ENCODE measurements at regions of chr12 and their contacts with region 1.

Region 1: GRCh38 chr12:57355734-57356133 is 75.1 kb downstream of the R3HDM2 start:
- DNase-seq: no peak
- H3K4me3 ChIP-seq: no peak overlapping the region
- H3K27ac ChIP-seq: no peak overlapping the region
- H3K4me1 ChIP-seq: no peaks in the 10 kb centered on the region
- H3K27me3 ChIP-seq: no peaks in the 10 kb centered on the region
- CTCF ChIP-seq: no peak

Region 2: GRCh38 chr12:57261428-57261865 is 94.3 kb before region 1 on chr12:
- CTCF ChIA-PET with region 1: interaction called, 16 read pairs
- POLR2A ChIA-PET with region 1: no interaction called
- intact Hi-C with region 1: no loop called
- DNase-seq: no peak
- H3K4me3 ChIP-seq: no peak overlapping the region
- H3K27ac ChIP-seq: no peak overlapping the region
- H3K4me1 ChIP-seq: no peaks in the 10 kb centered on the region
- H3K27me3 ChIP-seq: no peaks in the 10 kb centered on the region
- CTCF ChIP-seq: no peak

Region 3: GRCh38 chr12:57309420-57309819 is 46.3 kb before region 1 on chr12:
- CTCF ChIA-PET with region 1: no interaction called
- POLR2A ChIA-PET with region 1: interaction called, 15 read pairs
- intact Hi-C with region 1: no loop called
- DNase-seq: no peak
- H3K4me3 ChIP-seq: no peak overlapping the region
- H3K27ac ChIP-seq: no peak overlapping the region
- H3K4me1 ChIP-seq: no peaks in the 10 kb centered on the region
- H3K27me3 ChIP-seq: no peaks in the 10 kb centered on the region
- CTCF ChIP-seq: no peak

Region 4: GRCh38 chr12:57397441-57397840 is 41.7 kb after region 1 on chr12:
- CTCF ChIA-PET with region 1: no interaction called
- POLR2A ChIA-PET with region 1: no interaction called
- intact Hi-C with region 1: no loop called
- DNase-seq: no peak
- H3K4me3 ChIP-seq: no peak overlapping the region
- H3K27ac ChIP-seq: no peak overlapping the region
- H3K4me1 ChIP-seq: no peaks in the 10 kb centered on the region
- H3K27me3 ChIP-seq: no peaks in the 10 kb centered on the region
- CTCF ChIP-seq: no peak

Region 5: GRCh38 chr12:57452937-57453509 is 97.3 kb after region 1 on chr12:
- CTCF ChIA-PET with region 1: interaction called, 10 read pairs
- POLR2A ChIA-PET with region 1: no interaction called
- intact Hi-C with region 1: no loop called
- DNase-seq: peak; percentile 82
- H3K4me3 ChIP-seq: no peak overlapping the region
- H3K27ac ChIP-seq: no peak overlapping the region
- H3K4me1 ChIP-seq: peaks cover 29% of the 10 kb centered on the region
- H3K27me3 ChIP-seq: no peaks in the 10 kb centered on the region
- CTCF ChIP-seq: peak; percentile 88

Region 6: GRCh38 chr12:57781244-57781643 is 425.5 kb after region 1 on chr12:
- CTCF ChIA-PET with region 1: no interaction called
- POLR2A ChIA-PET with region 1: interaction called, 11 read pairs
- intact Hi-C with region 1: no loop called
- DNase-seq: no peak
- H3K4me3 ChIP-seq: no peak overlapping the region
- H3K27ac ChIP-seq: no peak overlapping the region
- H3K4me1 ChIP-seq: no peaks in the 10 kb centered on the region
- H3K27me3 ChIP-seq: no peaks in the 10 kb centered on the region
- CTCF ChIP-seq: no peak